CD4-positive, alpha-beta T cell (primary cell): ENCODE measurements at regions of chr9 and their contacts with region 1.

Region 1: GRCh38 chr9:136545966-136546698 is at the start of gene NOTCH1:
- DNase-seq: peak; percentile 71 to 94 (median 84)
- ATAC-seq: peak; percentile 71
- H3K4me3 ChIP-seq: peak within 1 kb of the TSS; percentile 87
- H3K4me3 Mint-ChIP-seq: peak within 1 kb of the TSS; percentile 92
- H3K27ac ChIP-seq: peak within 1 kb of the TSS in 1 of 2 donors; percentile 70
- H3K27ac Mint-ChIP-seq: peak within 1 kb of the TSS; percentile 83
- H3K4me1 ChIP-seq: peaks cover 58% of the 10 kb centered on the region
- H3K4me1 Mint-ChIP-seq: peaks cover 23% of the 10 kb centered on the region
- H3K27me3 ChIP-seq: no peaks in the 10 kb centered on the region
- H3K27me3 Mint-ChIP-seq: no peaks in the 10 kb centered on the region
- CTCF ChIP-seq: no peak
- total RNA-seq, gene NOTCH1: 30.8 to 34.2 TPM

Region 2: GRCh38 chr9:136245219-136246150 is 300.6 kb before region 1 on chr9 and contains the start of gene QSOX2:
- CTCF ChIA-PET with region 1: no interaction called
- POLR2A ChIA-PET with region 1: no interaction called
- intact Hi-C with region 1: no loop called
- DNase-seq: peak; percentile 73 to 94 (median 84)
- ATAC-seq: peak; percentile 81
- H3K4me3 ChIP-seq: peak within 1 kb of the TSS; percentile 63
- H3K4me3 Mint-ChIP-seq: peak within 1 kb of the TSS; percentile 94
- H3K27ac ChIP-seq: peak within 1 kb of the TSS; percentile 15 to 20
- H3K27ac Mint-ChIP-seq: peak within 1 kb of the TSS; percentile 76
- H3K4me1 ChIP-seq: peaks cover 39% of the 10 kb centered on the region
- H3K4me1 Mint-ChIP-seq: peaks cover 41% of the 10 kb centered on the region
- H3K27me3 ChIP-seq: no peaks in the 10 kb centered on the region
- H3K27me3 Mint-ChIP-seq: no peaks in the 10 kb centered on the region
- CTCF ChIP-seq: no peak
- total RNA-seq, gene QSOX2: 14.4 TPM

Region 3: DNA sequence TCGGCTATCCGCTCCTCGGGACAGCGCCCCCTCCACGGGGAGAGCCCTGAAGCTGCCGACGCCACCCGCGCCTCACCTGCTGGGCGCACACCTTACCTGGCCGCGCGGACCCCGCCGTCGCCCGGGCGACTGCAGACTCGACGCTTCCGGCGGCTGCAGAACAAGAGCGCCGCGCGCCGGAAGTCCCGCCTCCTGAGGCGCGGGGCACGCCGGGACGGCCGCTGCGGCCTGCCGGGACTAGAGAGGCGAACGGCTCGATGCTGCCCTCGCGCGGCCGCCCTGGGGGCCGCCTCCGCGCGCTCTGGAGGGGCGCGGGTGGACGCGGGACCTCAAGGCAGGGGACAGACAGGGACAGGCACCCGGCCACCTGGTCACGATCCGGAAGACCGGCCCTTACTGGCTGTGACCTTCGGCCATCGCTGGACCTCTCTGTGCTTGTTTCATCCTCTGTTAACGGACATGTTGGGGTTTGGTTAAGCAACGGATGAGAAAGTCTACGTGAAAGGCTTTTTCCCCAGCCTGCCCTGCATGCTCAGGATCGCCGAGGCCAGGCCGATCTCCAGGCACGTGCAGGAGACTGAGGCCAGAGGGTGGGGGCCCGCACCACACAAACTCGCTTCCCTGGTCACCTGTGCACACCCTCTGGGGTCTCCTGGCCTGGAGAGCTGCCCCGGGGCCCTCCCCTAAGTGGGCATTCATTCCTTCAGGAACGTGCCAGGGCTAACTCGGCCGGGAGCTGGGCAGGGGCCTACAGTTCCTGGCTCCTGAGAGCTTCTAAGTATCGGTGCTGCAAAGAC is 145.9 kb before region 1 on chr9 and contains the start of gene SNAPC4:
- CTCF ChIA-PET with region 1: no interaction called
- POLR2A ChIA-PET with region 1: no interaction called
- intact Hi-C with region 1: loop called in 1 of 2 experiments (anchors 10 kb)
- DNase-seq: peak; percentile 75 to 95 (median 86)
- ATAC-seq: peak; percentile 66
- H3K4me3 ChIP-seq: peak within 1 kb of the TSS; percentile 72
- H3K4me3 Mint-ChIP-seq: peak within 1 kb of the TSS; percentile 88
- H3K27ac ChIP-seq: no peak within 1 kb of the TSS
- H3K27ac Mint-ChIP-seq: peak within 1 kb of the TSS; percentile 55
- H3K4me1 ChIP-seq: peaks cover 59% of the 10 kb centered on the region
- H3K4me1 Mint-ChIP-seq: peaks cover 41% of the 10 kb centered on the region
- H3K27me3 ChIP-seq: no peaks in the 10 kb centered on the region
- H3K27me3 Mint-ChIP-seq: no peaks in the 10 kb centered on the region
- CTCF ChIP-seq: peak; percentile 87
- total RNA-seq, gene SNAPC4: 7.7 to 8.0 TPM

Region 4: GRCh38 chr9:136488247-136489214 is 57.6 kb before region 1 on chr9:
- CTCF ChIA-PET with region 1: interaction called, 3 read pairs
- POLR2A ChIA-PET with region 1: interaction called, 25 read pairs
- intact Hi-C with region 1: loop called (anchors 1 to 5 kb)
- DNase-seq: peak; percentile 60 to 86 (median 72)
- ATAC-seq: peak; percentile 56
- H3K4me3 ChIP-seq: no peak overlapping the region
- H3K4me3 Mint-ChIP-seq: no peak overlapping the region
- H3K27ac ChIP-seq: no peak overlapping the region
- H3K27ac Mint-ChIP-seq: no peak overlapping the region
- H3K4me1 ChIP-seq: peaks cover 23% of the 10 kb centered on the region
- H3K4me1 Mint-ChIP-seq: peaks cover 7% of the 10 kb centered on the region
- H3K27me3 ChIP-seq: no peaks in the 10 kb centered on the region
- H3K27me3 Mint-ChIP-seq: no peaks in the 10 kb centered on the region
- CTCF ChIP-seq: peak; percentile 96

Region 5: DNA sequence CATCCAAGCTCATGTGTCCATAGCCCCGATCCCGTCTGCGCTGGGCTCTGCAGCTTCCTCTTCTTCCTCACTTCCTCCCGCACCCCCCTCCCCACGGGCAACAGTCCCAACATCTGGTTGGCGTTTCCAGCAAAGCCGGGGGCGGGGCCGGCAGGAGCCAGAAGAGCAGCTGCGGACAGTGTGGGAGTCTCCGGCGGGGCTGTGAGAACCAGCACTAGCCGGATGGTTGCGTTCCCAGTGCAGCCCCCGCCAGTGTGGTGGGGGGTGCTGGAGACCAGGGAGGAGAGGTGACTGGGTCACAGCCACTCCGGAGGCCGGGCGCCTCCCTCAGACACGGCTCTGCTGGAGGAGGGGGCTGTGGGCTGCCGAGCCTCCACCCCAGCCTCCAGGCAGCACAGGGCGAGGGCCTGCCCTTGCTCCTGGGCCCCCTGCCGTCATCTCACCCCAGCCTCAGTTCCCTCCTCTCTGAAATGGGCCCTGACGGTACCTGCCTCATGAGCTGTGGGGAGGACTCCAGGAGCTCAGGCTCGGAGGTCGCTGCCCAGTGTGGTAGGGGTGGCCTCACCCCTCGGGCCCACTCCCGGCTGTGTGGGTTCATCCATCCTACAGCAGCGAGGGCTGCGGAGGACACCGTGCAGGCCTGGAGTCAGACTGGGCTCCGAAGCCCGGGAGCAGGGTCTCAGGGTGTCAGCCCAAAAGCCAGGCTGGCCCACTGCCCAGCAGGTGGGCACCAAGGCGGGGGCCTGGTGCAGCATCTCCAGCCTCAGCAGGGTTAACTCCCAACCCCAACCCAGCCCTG is 41.2 kb after region 1 on chr9:
- CTCF ChIA-PET with region 1: no interaction called
- POLR2A ChIA-PET with region 1: no interaction called
- intact Hi-C with region 1: loop called (anchors 5 kb)
- DNase-seq: peak in 2 of 14 experiments; percentile 42 to 43
- ATAC-seq: no peak
- H3K4me3 ChIP-seq: no peak overlapping the region
- H3K4me3 Mint-ChIP-seq: no peak overlapping the region
- H3K27ac ChIP-seq: no peak overlapping the region
- H3K27ac Mint-ChIP-seq: no peak overlapping the region
- H3K4me1 ChIP-seq: peaks cover 29% of the 10 kb centered on the region
- H3K4me1 Mint-ChIP-seq: peaks cover 15% of the 10 kb centered on the region
- H3K27me3 ChIP-seq: no peaks in the 10 kb centered on the region
- H3K27me3 Mint-ChIP-seq: no peaks in the 10 kb centered on the region
- CTCF ChIP-seq: no peak

Region 6: DNA sequence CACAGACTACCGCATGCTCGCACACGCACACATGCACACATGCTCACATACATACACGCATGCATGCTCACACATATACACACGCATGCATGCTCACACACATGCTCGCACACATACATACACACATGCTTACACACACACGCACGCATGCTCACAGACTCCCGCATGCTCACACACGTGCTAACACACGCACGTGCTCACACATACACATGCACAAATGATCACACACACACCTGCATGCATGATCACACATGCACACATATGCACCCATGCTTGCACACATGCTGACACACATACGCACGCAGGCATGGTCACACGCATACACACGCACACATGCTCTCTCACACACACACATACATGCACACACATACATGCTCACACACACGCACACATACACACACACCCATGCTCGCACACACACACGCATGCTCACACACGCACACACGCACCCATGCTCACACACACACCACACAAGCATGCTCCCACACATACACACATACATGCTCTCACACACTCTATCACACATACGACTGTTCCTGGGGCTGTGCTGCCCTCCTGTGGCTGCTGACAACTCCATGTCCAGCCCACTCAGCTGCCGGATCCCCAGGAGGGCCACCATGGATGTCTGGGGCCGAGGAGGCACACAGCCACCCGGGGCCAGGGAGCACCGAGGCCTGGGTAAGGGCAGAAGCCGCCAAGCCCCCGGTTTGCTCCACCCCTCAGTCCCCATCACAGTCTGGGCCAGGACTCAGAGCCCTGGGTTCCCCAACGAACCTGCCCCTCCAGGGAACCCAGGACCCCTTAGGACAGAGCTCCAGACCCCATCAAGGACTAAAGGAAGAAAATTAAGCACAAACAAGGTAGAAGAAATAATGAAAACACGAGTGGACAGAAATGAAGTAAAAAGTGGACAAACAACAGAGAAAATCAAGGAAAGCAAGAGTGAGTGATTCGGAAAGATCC is 85.2 kb after region 1 on chr9:
- CTCF ChIA-PET with region 1: no interaction called
- POLR2A ChIA-PET with region 1: no interaction called
- intact Hi-C with region 1: loop called in 1 of 2 experiments (anchors 5 kb)
- DNase-seq: peak; percentile 74 to 91 (median 80)
- ATAC-seq: peak; percentile 88
- H3K4me3 ChIP-seq: no peak overlapping the region
- H3K4me3 Mint-ChIP-seq: no peak overlapping the region
- H3K27ac ChIP-seq: no peak overlapping the region
- H3K27ac Mint-ChIP-seq: no peak overlapping the region
- H3K4me1 ChIP-seq: peaks cover 27% of the 10 kb centered on the region
- H3K4me1 Mint-ChIP-seq: no peaks in the 10 kb centered on the region
- H3K27me3 ChIP-seq: no peaks in the 10 kb centered on the region
- H3K27me3 Mint-ChIP-seq: peaks cover 3% of the 10 kb centered on the region
- CTCF ChIP-seq: peak; percentile 76

Region 7: GRCh38 chr9:136728080-136728547 is 182.0 kb after region 1 on chr9:
- CTCF ChIA-PET with region 1: no interaction called
- POLR2A ChIA-PET with region 1: no interaction called
- intact Hi-C with region 1: loop called in 1 of 2 experiments (anchors 5 kb)
- DNase-seq: peak; percentile 84 to 97 (median 94)
- ATAC-seq: peak; percentile 73
- H3K4me3 ChIP-seq: peak overlapping the region; percentile 94
- H3K4me3 Mint-ChIP-seq: peak overlapping the region; percentile 74
- H3K27ac ChIP-seq: peak overlapping the region in 1 of 2 donors; percentile 65
- H3K27ac Mint-ChIP-seq: peak overlapping the region; percentile 92
- H3K4me1 ChIP-seq: peaks cover 40% of the 10 kb centered on the region
- H3K4me1 Mint-ChIP-seq: peaks cover 24% of the 10 kb centered on the region
- H3K27me3 ChIP-seq: no peaks in the 10 kb centered on the region
- H3K27me3 Mint-ChIP-seq: peaks cover 7% of the 10 kb centered on the region
- CTCF ChIP-seq: peak; percentile 80